ENCODE measurements at regions of chr19 and their contacts with region 1.

Region 1: DNA sequence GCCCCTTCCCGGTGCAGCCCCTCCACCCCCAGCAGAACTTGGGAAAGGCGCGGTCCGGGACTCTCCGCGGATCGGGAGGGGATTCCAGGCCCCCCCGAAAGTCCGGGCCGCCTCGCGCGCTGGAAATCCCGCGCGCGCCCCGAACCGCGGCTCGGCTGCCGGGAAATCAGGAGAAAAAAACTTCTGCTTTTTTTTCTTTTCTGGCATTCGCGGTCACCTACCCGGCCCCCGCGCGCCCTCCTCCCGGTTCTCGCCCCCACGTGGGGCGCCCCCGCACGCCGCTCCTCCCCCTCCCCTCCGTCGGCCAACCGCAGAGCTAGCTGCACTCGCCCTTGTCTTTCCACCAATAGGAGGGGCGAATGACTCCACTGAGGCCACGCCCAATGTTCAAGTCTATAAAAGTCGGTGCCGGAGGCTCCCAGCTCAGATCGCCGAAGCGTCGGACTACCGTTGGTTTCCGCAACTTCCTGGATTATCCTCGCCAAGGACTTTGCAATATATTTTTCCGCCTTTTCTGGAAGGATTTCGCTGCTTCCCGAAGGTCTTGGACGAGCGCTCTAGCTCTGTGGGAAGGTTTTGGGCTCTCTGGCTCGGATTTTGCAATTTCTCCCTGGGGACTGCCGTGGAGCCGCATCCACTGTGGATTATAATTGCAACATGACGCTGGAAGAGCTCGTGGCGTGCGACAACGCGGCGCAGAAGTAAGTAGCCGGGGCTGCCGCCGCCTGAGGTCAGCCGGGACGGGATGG is at the start of gene GADD45B:
- DNase-seq: peak; percentile 99
- total RNA-seq, gene GADD45B: 54.4 TPM

Region 2: GRCh38 chr19:2455851-2456570 is 19.9 kb before region 1 on chr19:
- intact Hi-C with region 1: no loop called
- DNase-seq: no peak

Region 3: DNA sequence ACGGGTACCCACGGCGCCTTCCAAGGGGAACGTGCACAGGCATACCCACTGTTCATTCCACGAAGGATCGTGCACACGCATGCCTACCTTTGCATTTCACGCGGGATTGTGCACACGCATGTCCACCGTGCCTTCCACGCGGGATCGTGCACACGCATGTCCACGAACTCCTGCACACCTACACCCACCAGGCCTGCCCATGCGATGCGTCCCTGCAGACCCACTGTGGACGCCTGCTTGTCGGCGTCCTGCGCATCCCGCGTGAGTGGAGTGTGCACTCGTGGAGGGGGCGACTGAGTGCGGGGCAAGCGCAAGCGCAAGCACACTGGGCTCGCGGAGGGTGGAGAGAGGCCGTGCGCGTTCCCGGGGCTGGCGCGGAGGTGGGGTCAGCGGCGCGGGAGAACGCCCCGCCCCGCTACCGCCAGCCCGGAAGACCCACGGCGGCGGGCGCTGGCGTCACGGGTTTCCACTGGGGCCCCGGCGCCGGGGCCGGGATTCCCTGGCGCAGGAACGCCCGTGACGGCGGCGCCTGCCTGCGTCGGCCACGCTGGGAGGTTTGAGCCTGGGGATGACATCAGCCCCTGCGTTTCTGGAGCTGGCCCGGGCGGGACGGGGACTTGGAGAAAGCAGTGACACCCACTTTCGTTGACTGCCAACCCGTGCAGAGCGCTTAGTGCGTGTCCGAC is 18.7 kb after region 1 on chr19:
- intact Hi-C with region 1: loop called (anchors 2 kb)
- DNase-seq: peak; percentile 90

Region 4: GRCh38 chr19:2540646-2541454 is 65.0 kb after region 1 on chr19:
- intact Hi-C with region 1: loop called (anchors 1 kb)
- DNase-seq: peak; percentile 94

Region 5: DNA sequence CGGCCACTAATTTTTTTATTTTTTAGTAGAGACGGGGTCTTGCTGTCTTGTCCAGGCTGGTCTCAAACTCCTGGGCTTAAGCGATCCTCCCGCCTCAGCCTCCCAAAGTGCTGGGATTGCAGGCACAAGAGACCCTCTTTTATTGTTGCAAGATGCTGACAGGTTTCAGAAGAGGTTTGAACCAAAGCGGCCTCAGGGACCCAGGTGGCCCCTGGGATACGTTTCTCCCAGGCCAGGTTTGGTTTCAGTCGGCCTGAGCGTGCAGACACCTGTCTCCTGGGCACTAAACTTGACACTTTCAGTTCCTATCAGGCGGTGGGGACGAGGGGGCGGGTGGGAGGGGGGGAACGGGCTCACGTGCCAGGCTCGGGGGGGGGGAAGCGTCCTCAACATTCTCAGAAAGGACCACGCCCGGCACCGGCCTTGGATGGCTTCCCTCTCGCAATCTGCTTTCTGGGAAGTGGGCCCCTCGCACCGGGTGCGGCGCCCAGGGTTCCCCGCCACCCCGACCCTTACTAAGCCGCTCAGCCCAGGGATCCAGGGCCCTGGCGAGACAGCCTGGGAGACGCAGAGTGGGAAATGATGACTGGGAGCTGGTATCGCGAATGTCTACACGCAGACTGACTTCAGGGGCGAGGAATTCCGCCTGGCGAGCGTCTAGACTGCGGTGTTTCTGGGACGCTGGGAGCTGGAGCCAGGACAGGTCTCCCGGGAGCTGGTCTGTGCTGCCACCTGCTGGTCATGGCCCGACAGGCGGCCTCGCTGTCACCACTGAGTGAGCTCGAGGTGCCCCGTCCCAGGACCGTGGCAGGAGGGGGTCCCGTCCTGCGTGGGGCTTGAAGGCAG is 135.0 kb after region 1 on chr19:
- intact Hi-C with region 1: loop called (anchors 1 kb)
- DNase-seq: peak; percentile 97